Tibial artery (tissue), 4 donors: ENCODE measurements at regions of chr10 and their contacts with region 1.

Region 1: GRCh38 chr10:102743588-102744373 is at the start of gene WBP1L:
- DNase-seq: peak; percentile 98 to 99
- H3K4me3 ChIP-seq: peak within 1 kb of the TSS; percentile 82 to 86
- H3K27ac ChIP-seq: peak within 1 kb of the TSS; percentile 94 to 96
- H3K4me1 ChIP-seq: peaks cover 0 to 49% (median 9%) of the 10 kb centered on the region in 4 donors
- H3K27me3 ChIP-seq: no peaks in the 10 kb centered on the region
- CTCF ChIP-seq: peak in 1 of 2 experiments; percentile 4

Region 2: DNA sequence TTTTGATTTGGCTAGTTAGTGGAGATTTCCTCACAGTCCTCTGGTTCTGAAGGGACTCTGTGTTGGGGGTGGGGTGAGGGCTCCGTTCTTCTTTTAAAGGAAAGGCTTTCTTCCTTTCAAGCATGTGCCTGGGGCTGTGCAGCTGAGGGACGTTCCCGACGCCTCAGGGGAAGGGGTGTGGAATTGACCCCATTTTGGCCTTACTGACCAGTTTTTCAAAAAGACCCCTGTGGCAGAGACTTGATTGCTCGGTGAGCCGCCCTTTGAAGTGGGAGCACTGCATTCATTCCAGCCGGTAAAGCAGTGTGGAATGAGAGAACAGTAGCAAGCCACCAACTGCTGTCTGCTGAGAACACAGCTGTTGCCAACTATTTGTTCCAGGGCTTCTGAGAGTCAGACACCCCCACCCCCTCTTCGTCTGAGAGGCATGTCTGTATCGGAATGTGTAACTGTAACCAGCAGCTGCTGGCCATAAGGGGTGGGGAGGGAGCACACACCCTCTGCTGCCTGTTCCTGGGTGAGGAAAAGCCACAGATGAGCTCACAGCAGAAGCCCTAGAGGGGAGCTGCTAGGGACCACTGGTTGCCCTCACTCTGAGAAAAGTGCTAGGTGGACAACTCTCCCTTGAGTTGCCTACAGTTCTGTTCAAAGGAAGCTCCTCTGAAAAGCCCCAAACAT is 33.1 kb after region 1 on chr10:
- intact Hi-C with region 1: loop called (anchors 5 kb)
- DNase-seq: peak; percentile 89 to 93
- H3K4me3 ChIP-seq: peak overlapping the region; percentile 49 to 59
- H3K27ac ChIP-seq: peak overlapping the region; percentile 83 to 95
- H3K4me1 ChIP-seq: peaks cover 13 to 98% (median 88%) of the 10 kb centered on the region in 4 donors
- H3K27me3 ChIP-seq: no peaks in the 10 kb centered on the region
- CTCF ChIP-seq: peak in 1 of 2 experiments; percentile 17

Region 3: GRCh38 chr10:102815790-102816549 is 72.2 kb after region 1 on chr10:
- intact Hi-C with region 1: loop called (anchors 5 kb)
- DNase-seq: peak; percentile 82 to 88
- H3K4me3 ChIP-seq: no peak overlapping the region
- H3K27ac ChIP-seq: peak overlapping the region; percentile 90 to 96
- H3K4me1 ChIP-seq: peaks cover 0 to 60% (median 41%) of the 10 kb centered on the region in 4 donors
- H3K27me3 ChIP-seq: no peaks in the 10 kb centered on the region
- CTCF ChIP-seq: no peak